Naive thymus-derived CD4-positive, alpha-beta T cell (primary cell): ENCODE measurements at regions of chr18 and their contacts with region 1.

Region 1: DNA sequence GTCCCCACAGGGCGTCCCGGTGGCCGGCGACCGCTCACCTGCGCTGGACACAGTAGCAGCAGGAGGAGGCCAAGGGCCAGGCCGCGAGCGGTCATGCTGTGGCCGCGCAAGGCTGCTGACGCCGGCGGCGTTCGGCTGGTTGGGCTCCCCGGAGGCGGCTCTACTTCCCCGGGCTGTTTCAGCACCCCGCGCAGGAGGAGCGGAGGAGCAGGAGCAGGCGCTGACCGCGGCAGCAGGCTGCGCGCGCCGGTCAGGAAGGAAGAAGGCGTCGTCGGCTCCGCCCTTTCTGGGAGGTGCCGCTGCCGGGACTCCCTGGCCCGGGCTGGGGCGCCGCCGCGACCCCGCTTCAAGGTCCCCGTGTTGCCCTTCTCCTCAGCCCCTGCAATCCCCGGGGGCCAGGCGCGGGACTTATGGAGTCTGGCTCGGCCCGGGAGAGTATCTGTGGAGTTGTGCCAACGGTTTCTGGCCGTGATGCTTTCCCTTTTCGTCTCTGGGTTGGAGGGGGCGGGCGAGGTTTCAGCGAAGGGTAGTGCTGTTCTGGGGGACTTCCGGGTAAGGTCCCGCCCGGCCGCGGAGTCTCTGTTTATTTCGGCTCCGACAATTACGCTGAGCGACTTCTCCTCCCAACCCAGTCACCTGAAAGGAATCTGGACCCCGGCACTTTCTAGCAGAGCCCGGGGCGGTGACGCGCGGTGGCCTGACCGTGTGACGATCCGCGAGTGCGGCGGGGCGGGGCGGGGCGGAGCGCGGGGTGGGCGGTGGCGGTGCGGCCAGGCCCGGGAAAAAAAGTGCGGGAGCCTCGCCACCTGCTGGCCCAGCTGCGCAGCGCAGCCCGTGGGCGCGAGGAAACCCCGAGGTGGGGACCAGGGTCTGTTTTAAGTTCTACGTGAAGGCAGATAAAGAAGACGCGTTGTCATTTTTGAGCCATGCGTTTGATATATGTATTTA is at the start of gene NPC1:
- DNase-seq: peak; percentile 88 to 95 (median 93)
- ATAC-seq: peak; percentile 93
- H3K4me3 ChIP-seq: peak within 1 kb of the TSS; percentile 76
- H3K4me3 Mint-ChIP-seq: peak within 1 kb of the TSS; percentile 79 to 96 (median 92)
- H3K27ac ChIP-seq: peak within 1 kb of the TSS; percentile 100
- H3K27ac Mint-ChIP-seq: peak within 1 kb of the TSS; percentile 84 to 97 (median 94)
- H3K4me1 ChIP-seq: peaks cover 9 to 25% of the 10 kb centered on the region in 2 donors
- H3K4me1 Mint-ChIP-seq: peaks cover 25 to 45% (median 37%) of the 10 kb centered on the region in 7 donors
- H3K27me3 ChIP-seq: no peaks in the 10 kb centered on the region
- H3K27me3 Mint-ChIP-seq: peaks cover 0 to 13% (median 0%) of the 10 kb centered on the region in 5 donors
- total RNA-seq, gene NPC1: 29.2 to 49.3 (median 31.4) TPM

Region 2: GRCh38 chr18:21740724-21741510 is 1845.6 kb before region 1 on chr18 and contains the start of gene MIB1:
- CTCF ChIA-PET with region 1: no interaction called
- POLR2A ChIA-PET with region 1: no interaction called
- intact Hi-C with region 1: loop called (anchors 2 to 5 kb)
- DNase-seq: peak in 8 of 9 donors; percentile 42 to 99 (median 99)
- ATAC-seq: peak; percentile 69
- H3K4me3 ChIP-seq: peak within 1 kb of the TSS; percentile 77
- H3K4me3 Mint-ChIP-seq: peak within 1 kb of the TSS; percentile 83 to 96 (median 94)
- H3K27ac ChIP-seq: peak within 1 kb of the TSS; percentile 83
- H3K27ac Mint-ChIP-seq: peak within 1 kb of the TSS; percentile 78 to 97 (median 94)
- H3K4me1 ChIP-seq: peaks cover 9 to 13% of the 10 kb centered on the region in 2 donors
- H3K4me1 Mint-ChIP-seq: peaks cover 21 to 58% (median 43%) of the 10 kb centered on the region in 7 donors
- H3K27me3 ChIP-seq: no peaks in the 10 kb centered on the region
- H3K27me3 Mint-ChIP-seq: peaks cover 0 to 18% (median 0%) of the 10 kb centered on the region in 5 donors
- total RNA-seq, gene MIB1: 16.0 to 35.2 (median 19.8) TPM

Region 3: GRCh38 chr18:23071285-23071684 is 515.2 kb before region 1 on chr18:
- CTCF ChIA-PET with region 1: no interaction called
- POLR2A ChIA-PET with region 1: no interaction called
- intact Hi-C with region 1: loop called (anchors 2 to 5 kb)
- DNase-seq: peak; percentile 49 to 94 (median 92)
- ATAC-seq: peak; percentile 99
- H3K4me3 ChIP-seq: peak overlapping the region; percentile 12
- H3K4me3 Mint-ChIP-seq: peak overlapping the region; percentile 73 to 91 (median 78)
- H3K27ac ChIP-seq: peak overlapping the region; percentile 18
- H3K27ac Mint-ChIP-seq: peak overlapping the region; percentile 69 to 94 (median 91)
- H3K4me1 ChIP-seq: peaks cover 44 to 50% of the 10 kb centered on the region in 2 donors
- H3K4me1 Mint-ChIP-seq: peaks cover 46 to 83% (median 77%) of the 10 kb centered on the region in 7 donors
- H3K27me3 ChIP-seq: no peaks in the 10 kb centered on the region
- H3K27me3 Mint-ChIP-seq: peaks cover 0 to 3% (median 0%) of the 10 kb centered on the region in 5 donors

Region 4: GRCh38 chr18:23231340-23232021 is 355.0 kb before region 1 on chr18:
- CTCF ChIA-PET with region 1: no interaction called
- POLR2A ChIA-PET with region 1: no interaction called
- intact Hi-C with region 1: loop called in 1 of 2 experiments (anchors 10 kb)
- DNase-seq: peak; percentile 14 to 86 (median 70)
- ATAC-seq: peak; percentile 93
- H3K4me3 ChIP-seq: peak overlapping the region; percentile 10
- H3K4me3 Mint-ChIP-seq: peak overlapping the region in 9 of 10 donors; percentile 7 to 80 (median 55)
- H3K27ac ChIP-seq: no peak overlapping the region
- H3K27ac Mint-ChIP-seq: peak overlapping the region; percentile 76 to 96 (median 88)
- H3K4me1 ChIP-seq: peaks cover 8 to 14% of the 10 kb centered on the region in 2 donors
- H3K4me1 Mint-ChIP-seq: peaks cover 0 to 78% (median 21%) of the 10 kb centered on the region in 7 donors
- H3K27me3 ChIP-seq: no peaks in the 10 kb centered on the region
- H3K27me3 Mint-ChIP-seq: no peaks in the 10 kb centered on the region

Region 5: GRCh38 chr18:23452728-23453679 is 133.5 kb before region 1 on chr18 and contains the start of gene RIOK3:
- CTCF ChIA-PET with region 1: no interaction called
- POLR2A ChIA-PET with region 1: no interaction called
- intact Hi-C with region 1: loop called (anchors 1 kb)
- DNase-seq: peak; percentile 68 to 96 (median 74)
- ATAC-seq: peak; percentile 97
- H3K4me3 ChIP-seq: peak within 1 kb of the TSS; percentile 82
- H3K4me3 Mint-ChIP-seq: peak within 1 kb of the TSS; percentile 92 to 100 (median 98)
- H3K27ac ChIP-seq: peak within 1 kb of the TSS; percentile 90
- H3K27ac Mint-ChIP-seq: peak within 1 kb of the TSS; percentile 91 to 99 (median 96)
- H3K4me1 ChIP-seq: peaks cover 13 to 25% of the 10 kb centered on the region in 2 donors
- H3K4me1 Mint-ChIP-seq: peaks cover 22 to 55% (median 47%) of the 10 kb centered on the region in 7 donors
- H3K27me3 ChIP-seq: no peaks in the 10 kb centered on the region
- H3K27me3 Mint-ChIP-seq: peaks cover 0 to 7% (median 0%) of the 10 kb centered on the region in 5 donors
- total RNA-seq, gene RIOK3: 74.0 to 153 (median 78.2) TPM

Region 6: GRCh38 chr18:23468753-23469459 is 117.6 kb before region 1 on chr18:
- CTCF ChIA-PET with region 1: no interaction called
- POLR2A ChIA-PET with region 1: no interaction called
- intact Hi-C with region 1: no loop called
- DNase-seq: no peak
- ATAC-seq: no peak
- H3K4me3 ChIP-seq: no peak overlapping the region
- H3K4me3 Mint-ChIP-seq: no peak overlapping the region
- H3K27ac ChIP-seq: no peak overlapping the region
- H3K27ac Mint-ChIP-seq: peak overlapping the region in 2 of 9 donors; percentile 36 to 46
- H3K4me1 ChIP-seq: no peaks in the 10 kb centered on the region
- H3K4me1 Mint-ChIP-seq: peaks cover 0 to 8% (median 0%) of the 10 kb centered on the region in 7 donors
- H3K27me3 ChIP-seq: no peaks in the 10 kb centered on the region
- H3K27me3 Mint-ChIP-seq: no peaks in the 10 kb centered on the region

Region 7: GRCh38 chr18:23540867-23541266 is 45.7 kb before region 1 on chr18:
- CTCF ChIA-PET with region 1: interaction called, 4 read pairs
- POLR2A ChIA-PET with region 1: interaction called, 3 read pairs
- intact Hi-C with region 1: loop called (anchors 1 to 2 kb)
- DNase-seq: peak in 6 of 9 donors; percentile 23 to 49 (median 36)
- ATAC-seq: peak; percentile 85
- H3K4me3 ChIP-seq: no peak overlapping the region
- H3K4me3 Mint-ChIP-seq: peak overlapping the region; percentile 52 to 81 (median 70)
- H3K27ac ChIP-seq: peak overlapping the region; percentile 44
- H3K27ac Mint-ChIP-seq: peak overlapping the region; percentile 70 to 92 (median 86)
- H3K4me1 ChIP-seq: peaks cover 11 to 37% of the 10 kb centered on the region in 2 donors
- H3K4me1 Mint-ChIP-seq: peaks cover 31 to 43% (median 41%) of the 10 kb centered on the region in 7 donors
- H3K27me3 ChIP-seq: no peaks in the 10 kb centered on the region
- H3K27me3 Mint-ChIP-seq: no peaks in the 10 kb centered on the region

Region 8: DNA sequence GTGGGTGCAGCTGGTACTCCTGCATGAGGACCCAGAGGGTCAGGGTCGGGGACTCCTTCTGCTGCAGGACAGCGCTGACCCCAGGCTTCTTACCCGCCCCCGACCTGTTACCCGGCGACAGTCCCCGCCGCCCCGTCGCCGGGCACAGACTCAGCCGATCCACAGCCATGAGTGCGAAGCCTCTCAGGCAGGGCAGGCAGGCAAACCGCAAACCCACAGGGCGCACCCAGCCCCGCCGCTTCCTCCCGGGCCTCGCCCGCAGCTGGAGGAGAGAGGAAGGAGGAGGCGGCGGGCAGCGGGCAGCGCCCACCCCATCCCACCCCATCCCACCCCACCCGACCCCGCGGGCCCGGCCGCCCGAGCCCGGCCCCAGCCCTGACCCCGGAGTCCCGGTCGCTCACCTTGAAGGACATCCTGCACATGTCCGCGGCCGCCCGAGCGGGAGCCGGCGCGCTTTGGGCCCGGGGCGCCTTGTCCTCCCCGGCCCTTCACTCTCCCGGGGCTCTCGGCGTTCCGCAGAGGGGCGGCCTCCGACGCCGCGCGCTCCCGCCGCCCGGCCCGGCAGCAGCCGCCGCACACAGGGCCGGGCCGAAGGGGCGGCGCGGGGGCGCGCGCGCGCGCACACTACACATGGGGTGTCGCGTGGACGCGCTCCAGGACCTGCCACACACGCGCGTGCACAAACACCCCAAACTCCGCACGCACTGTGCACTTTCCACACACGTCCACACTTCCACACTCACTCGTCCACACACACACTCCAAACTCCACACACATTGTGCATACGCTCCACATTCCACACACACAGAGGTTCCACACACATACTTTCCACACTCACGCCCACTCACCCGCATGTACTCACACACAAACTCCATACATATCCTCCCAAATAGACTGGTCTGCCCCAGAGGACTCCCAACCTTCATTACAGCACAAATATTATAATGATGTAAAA is 76.1 kb after region 1 on chr18 and contains the start of gene ANKRD29:
- CTCF ChIA-PET with region 1: no interaction called
- POLR2A ChIA-PET with region 1: no interaction called
- intact Hi-C with region 1: no loop called
- DNase-seq: peak; percentile 27 to 61 (median 53)
- ATAC-seq: peak; percentile 83
- H3K4me3 ChIP-seq: peak within 1 kb of the TSS; percentile 65
- H3K4me3 Mint-ChIP-seq: peak within 1 kb of the TSS; percentile 85 to 97 (median 90)
- H3K27ac ChIP-seq: no peak within 1 kb of the TSS
- H3K27ac Mint-ChIP-seq: peak within 1 kb of the TSS; percentile 20 to 90 (median 79)
- H3K4me1 ChIP-seq: peaks cover 17 to 19% of the 10 kb centered on the region in 2 donors
- H3K4me1 Mint-ChIP-seq: peaks cover 19 to 39% (median 27%) of the 10 kb centered on the region in 7 donors
- H3K27me3 ChIP-seq: peaks cover 0 to 14% of the 10 kb centered on the region in 2 donors
- H3K27me3 Mint-ChIP-seq: peaks cover 21 to 79% (median 29%) of the 10 kb centered on the region in 5 donors
- total RNA-seq, gene ANKRD29: 0.11 to 0.24 (median 0.17) TPM in 3 of 5 experiments, not detected in the others

Region 9: GRCh38 chr18:23812546-23813440 is 226.3 kb after region 1 on chr18:
- CTCF ChIA-PET with region 1: no interaction called
- POLR2A ChIA-PET with region 1: no interaction called
- intact Hi-C with region 1: loop called in 1 of 2 experiments (anchors 1 kb)
- DNase-seq: peak in 5 of 9 donors; percentile 21 to 46 (median 41)
- ATAC-seq: peak; percentile 61
- H3K4me3 ChIP-seq: no peak overlapping the region
- H3K4me3 Mint-ChIP-seq: no peak overlapping the region
- H3K27ac ChIP-seq: no peak overlapping the region
- H3K27ac Mint-ChIP-seq: peak overlapping the region in 1 of 9 donors; percentile 45
- H3K4me1 ChIP-seq: peaks cover 6 to 14% of the 10 kb centered on the region in 2 donors
- H3K4me1 Mint-ChIP-seq: peaks cover 4 to 29% (median 27%) of the 10 kb centered on the region in 7 donors
- H3K27me3 ChIP-seq: no peaks in the 10 kb centered on the region
- H3K27me3 Mint-ChIP-seq: peaks cover 0 to 18% (median 0%) of the 10 kb centered on the region in 5 donors